ENCODE measurements at regions of chr12 and their contacts with region 1.

Region 1: GRCh38 chr12:55728939-55729823 is at the start of gene CD63:
- DNase-seq: peak; percentile 89
- H3K4me3 Mint-ChIP-seq: peak within 1 kb of the TSS; percentile 87
- H3K27ac Mint-ChIP-seq: peak within 1 kb of the TSS; percentile 89
- H3K4me1 Mint-ChIP-seq: peaks cover 36% of the 10 kb centered on the region
- H3K27me3 Mint-ChIP-seq: no peaks in the 10 kb centered on the region
- total RNA-seq, gene CD63: 204 to 210 TPM

Region 2: GRCh38 chr12:55629058-55629841 is 99.9 kb before region 1 on chr12:
- CTCF ChIA-PET with region 1: no interaction called
- POLR2A ChIA-PET with region 1: no interaction called
- intact Hi-C with region 1: no loop called
- DNase-seq: peak; percentile 48
- H3K4me3 Mint-ChIP-seq: peak overlapping the region; percentile 1
- H3K27ac Mint-ChIP-seq: peak overlapping the region; percentile 35
- H3K4me1 Mint-ChIP-seq: peaks cover 22% of the 10 kb centered on the region
- H3K27me3 Mint-ChIP-seq: peaks cover 9% of the 10 kb centered on the region

Region 3: DNA sequence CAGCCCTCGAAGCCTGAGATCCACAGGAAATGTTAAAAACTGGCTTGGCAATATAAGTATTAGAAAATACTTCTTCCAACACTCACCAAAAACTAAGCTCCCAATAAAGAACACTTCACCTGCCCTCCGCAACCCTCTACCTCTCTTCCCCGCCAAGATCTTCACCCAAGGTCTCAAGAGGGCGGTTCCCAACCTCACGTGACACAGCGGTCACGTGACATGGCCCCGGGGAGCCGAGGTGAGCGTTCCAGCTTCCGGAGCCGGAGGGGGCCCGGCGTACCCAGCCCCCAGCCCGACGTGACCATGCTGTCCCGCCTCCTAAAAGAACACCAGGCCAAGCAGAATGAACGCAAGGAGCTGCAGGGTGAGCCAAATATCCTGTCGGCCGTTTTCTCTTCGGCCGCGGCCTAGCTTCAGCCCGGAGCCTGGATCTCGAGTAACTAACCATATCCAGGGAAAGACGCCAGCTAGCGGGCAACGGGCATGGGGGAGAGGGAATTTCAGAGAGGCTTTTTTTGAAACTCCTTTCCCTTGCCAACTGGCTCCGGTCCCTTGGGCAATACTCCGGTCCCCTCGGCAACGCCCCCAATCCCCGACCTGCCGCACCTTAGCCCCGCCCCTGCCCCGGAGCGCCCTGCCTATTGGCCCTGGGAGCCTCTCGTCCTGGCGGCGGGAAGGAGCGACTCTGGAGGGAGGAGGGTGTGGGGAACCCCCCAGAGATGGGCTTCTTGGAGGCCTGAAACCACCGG is 13.2 kb before region 1 on chr12 and contains the start of gene BLOC1S1:
- CTCF ChIA-PET with region 1: interaction called, 9 read pairs
- POLR2A ChIA-PET with region 1: interaction called, 23 read pairs
- intact Hi-C with region 1: loop called (anchors 1 kb)
- DNase-seq: peak; percentile 96
- H3K4me3 Mint-ChIP-seq: peak within 1 kb of the TSS; percentile 90
- H3K27ac Mint-ChIP-seq: peak within 1 kb of the TSS; percentile 89
- H3K4me1 Mint-ChIP-seq: peaks cover 30% of the 10 kb centered on the region
- H3K27me3 Mint-ChIP-seq: peaks cover 2% of the 10 kb centered on the region
- total RNA-seq, gene BLOC1S1: 153 to 162 TPM

Measured in activated CD4-positive, alpha-beta memory T cell treated with anti-CD3 and anti-CD28 coated beads for 36 hours (primary cell).